HCT116 (cell line): ENCODE measurements at regions of chr1 and their contacts with region 1.

Region 1: DNA sequence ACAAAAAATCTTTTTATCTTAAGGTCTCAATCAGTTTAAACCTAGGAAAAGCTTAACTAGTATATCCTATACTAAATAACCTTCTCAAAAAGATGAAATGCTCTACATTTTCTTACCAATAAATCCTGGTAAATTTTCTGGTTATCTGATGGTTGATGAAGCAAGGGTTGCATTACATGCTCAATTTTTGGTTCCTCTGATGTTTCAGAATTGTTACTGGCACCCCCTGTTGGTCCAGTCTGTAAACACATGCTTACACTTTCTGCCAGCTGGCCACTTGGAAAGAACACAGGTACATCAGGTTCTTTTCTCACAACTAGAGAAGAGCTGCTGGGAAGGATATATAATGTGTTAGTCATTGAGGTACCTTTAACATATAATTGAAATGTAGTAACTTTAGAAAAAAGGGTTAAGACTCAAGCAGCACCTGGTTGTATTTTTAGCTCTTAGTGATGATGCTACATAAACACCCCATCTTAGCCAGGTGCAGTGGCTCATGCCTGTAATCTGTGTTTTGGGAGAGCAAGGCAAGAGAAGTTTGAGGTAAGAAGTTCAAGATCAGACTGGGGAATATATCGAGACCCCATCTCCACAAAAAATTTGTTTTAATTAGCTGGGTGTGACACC is 30.9 kb upstream of the TAL1 start:
- DNase-seq: peak; percentile 24
- ATAC-seq: peak; percentile 82
- H3K4me3 ChIP-seq: no peak overlapping the region
- H3K27ac ChIP-seq: no peak overlapping the region
- H3K4me1 ChIP-seq: no peaks in the 10 kb centered on the region
- H3K27me3 ChIP-seq: no peaks in the 10 kb centered on the region
- CTCF ChIP-seq: peak; percentile 55 to 74 (median 69); a peak in 5 of 6 replicates
- POLR2A ChIP-seq: no peak
- RAD21 ChIP-seq: peak; percentile 44

Region 2: DNA sequence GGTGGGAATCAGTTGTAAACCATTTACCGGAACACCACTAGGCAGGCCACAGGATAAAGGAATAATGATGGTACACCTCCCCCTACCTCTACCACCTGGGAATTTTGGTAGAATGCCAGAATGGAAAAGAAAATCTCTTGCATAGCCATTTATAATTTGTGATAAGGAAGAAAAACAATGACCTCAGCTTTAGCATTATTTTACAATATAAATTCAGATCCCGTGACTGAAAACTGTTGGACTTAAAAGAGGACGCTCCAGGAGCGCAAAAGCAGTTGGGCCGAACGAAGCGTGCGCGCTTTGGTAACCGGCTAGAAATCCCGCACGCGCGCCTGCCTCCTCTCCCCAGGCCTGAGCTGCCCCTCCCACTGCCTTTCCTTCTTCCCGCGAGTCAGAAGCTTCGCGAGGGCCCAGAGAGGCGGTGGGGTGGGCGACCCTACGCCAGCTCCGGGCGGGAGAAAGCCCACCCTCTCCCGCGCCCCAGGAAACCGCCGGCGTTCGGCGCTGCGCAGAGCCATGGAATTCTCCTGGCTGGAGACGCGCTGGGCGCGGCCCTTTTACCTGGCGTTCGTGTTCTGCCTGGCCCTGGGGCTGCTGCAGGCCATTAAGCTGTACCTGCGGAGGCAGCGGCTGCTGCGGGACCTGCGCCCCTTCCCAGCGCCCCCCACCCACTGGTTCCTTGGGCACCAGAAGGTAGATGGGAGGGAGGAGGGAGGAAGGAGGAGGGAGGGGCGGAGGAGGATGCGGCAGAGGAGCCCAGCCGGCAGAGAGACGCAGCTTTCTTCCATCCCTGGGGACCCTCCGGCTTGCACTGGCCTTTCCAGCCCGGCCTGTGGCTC is 239.4 kb before region 1 on chr1 and contains the start of gene CYP4X1:
- CTCF ChIA-PET with region 1: no interaction called
- POLR2A ChIA-PET with region 1: no interaction called
- RAD21 ChIA-PET with region 1: no interaction called
- intact Hi-C with region 1: no loop called
- DNase-seq: no peak
- ATAC-seq: no peak
- H3K4me3 ChIP-seq: no peak within 1 kb of the TSS
- H3K27ac ChIP-seq: no peak within 1 kb of the TSS
- H3K4me1 ChIP-seq: no peaks in the 10 kb centered on the region
- H3K27me3 ChIP-seq: 0 out of 2 replicates have a peak, but pooled peaks cover 3% of the 10 kb centered on the region
- CTCF ChIP-seq: no peak
- POLR2A ChIP-seq: no peak
- RAD21 ChIP-seq: no peak
- total RNA-seq, gene CYP4X1: not detected

Region 3: DNA sequence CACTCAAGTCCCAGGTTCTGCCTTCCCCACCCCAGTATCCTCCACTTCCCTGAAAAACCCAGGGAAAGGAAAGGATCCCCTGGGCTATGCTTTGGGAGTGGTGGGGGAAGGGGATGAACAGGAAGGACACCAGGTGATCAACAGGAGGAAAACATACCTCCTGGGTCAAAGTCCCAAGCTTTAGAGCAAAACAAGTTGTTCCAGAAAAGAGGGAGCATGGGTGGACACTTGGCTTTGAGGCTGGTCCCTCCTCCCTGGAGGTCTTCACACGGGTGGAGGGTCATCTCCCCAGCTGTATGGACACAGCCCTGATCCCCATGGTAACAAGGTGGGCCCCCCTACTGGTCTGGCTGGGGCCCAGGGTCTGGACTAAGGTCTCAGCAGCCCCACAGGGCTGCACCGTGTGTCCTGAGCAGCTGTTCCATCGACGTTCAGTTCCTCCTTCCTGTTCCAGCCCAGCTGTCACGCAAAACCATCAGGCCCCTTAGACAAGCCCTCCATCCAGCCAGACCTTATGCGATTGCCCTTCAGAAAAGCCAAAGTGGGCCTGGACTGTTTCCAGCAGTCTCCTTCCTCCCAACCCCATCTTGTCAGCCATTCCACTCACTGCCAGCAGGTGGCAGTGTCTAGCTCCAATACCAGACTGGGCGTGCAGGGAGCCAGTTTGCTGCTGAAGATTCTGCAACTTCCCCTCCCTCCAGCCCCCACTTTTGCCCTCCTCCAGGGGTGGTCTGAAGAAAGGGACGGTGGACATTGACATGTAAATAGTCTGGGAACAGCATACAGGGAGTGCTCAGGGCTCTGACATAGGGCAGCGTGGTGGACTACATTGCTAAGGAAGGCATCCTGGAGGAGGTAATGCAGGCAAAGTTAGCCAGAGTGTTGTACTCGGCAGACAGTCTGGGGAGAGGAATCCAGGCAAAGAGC is 70.2 kb before region 1 on chr1:
- CTCF ChIA-PET with region 1: interaction called, 9 read pairs
- POLR2A ChIA-PET with region 1: no interaction called
- RAD21 ChIA-PET with region 1: interaction called, 3 to 4 read pairs
- intact Hi-C with region 1: loop called (anchors 1 kb)
- DNase-seq: peak; percentile 42
- ATAC-seq: peak; percentile 85
- H3K4me3 ChIP-seq: no peak overlapping the region
- H3K27ac ChIP-seq: no peak overlapping the region
- H3K4me1 ChIP-seq: peaks cover 3 to 19% of the 10 kb centered on the region in 2 experiments; a peak in 3 of 4 replicates
- H3K27me3 ChIP-seq: no peaks in the 10 kb centered on the region
- CTCF ChIP-seq: peak; percentile 76 to 99 (median 98)
- POLR2A ChIP-seq: no peak
- RAD21 ChIP-seq: peak; percentile 85

Region 4: DNA sequence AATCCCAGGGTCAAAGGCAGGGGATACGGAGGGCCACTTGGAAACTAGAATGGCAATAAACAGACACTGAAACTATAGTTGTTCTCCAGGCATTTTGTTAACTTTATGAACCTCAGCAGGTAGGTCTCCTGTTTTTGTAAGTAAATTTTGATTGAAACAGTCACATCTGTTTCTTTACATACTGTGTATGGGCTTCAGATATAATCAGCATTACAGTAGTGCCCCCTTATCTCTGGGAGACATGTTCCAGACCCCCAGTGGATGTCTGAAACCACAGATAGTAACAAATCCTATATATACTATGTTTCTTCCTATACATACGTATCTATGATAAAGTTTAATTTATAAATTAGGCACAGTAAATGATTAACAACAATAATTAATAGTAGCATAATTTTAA is 39.6 kb after region 1 on chr1:
- CTCF ChIA-PET with region 1: no interaction called
- POLR2A ChIA-PET with region 1: no interaction called
- RAD21 ChIA-PET with region 1: no interaction called
- intact Hi-C with region 1: loop called (anchors 5 kb)
- DNase-seq: no peak
- ATAC-seq: no peak
- H3K4me3 ChIP-seq: no peak overlapping the region
- H3K27ac ChIP-seq: no peak overlapping the region
- H3K4me1 ChIP-seq: no peaks in the 10 kb centered on the region
- H3K27me3 ChIP-seq: no peaks in the 10 kb centered on the region
- CTCF ChIP-seq: no peak
- POLR2A ChIP-seq: no peak
- RAD21 ChIP-seq: no peak

Region 5: DNA sequence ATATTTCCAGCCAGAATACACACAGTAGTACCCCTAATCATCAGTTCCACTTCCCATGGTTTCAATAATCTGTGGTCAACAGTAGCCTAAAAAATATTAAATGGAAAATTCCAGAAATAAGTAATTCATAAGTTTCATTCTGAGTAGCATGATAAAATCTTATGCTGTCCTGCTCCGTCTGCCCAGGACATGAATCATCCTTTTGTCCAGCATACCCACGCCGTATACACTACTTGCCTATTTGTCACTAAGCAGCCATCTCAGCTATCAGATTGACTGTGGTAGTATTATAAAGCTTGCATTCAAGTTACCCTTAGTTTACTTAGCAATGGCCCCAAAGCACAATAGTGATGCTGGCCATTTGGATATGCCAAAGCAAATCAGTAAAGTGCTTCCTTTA is 1078.3 kb after region 1 on chr1:
- CTCF ChIA-PET with region 1: no interaction called
- POLR2A ChIA-PET with region 1: no interaction called
- RAD21 ChIA-PET with region 1: no interaction called
- intact Hi-C with region 1: no loop called
- DNase-seq: no peak
- ATAC-seq: no peak
- H3K4me3 ChIP-seq: no peak overlapping the region
- H3K27ac ChIP-seq: no peak overlapping the region
- H3K4me1 ChIP-seq: no peaks in the 10 kb centered on the region
- H3K27me3 ChIP-seq: no peaks in the 10 kb centered on the region
- CTCF ChIP-seq: no peak
- POLR2A ChIP-seq: no peak
- RAD21 ChIP-seq: no peak